Thyroid gland (tissue), 4 donors: ENCODE measurements at regions of chr19 and their contacts with region 1.

Region 1: DNA sequence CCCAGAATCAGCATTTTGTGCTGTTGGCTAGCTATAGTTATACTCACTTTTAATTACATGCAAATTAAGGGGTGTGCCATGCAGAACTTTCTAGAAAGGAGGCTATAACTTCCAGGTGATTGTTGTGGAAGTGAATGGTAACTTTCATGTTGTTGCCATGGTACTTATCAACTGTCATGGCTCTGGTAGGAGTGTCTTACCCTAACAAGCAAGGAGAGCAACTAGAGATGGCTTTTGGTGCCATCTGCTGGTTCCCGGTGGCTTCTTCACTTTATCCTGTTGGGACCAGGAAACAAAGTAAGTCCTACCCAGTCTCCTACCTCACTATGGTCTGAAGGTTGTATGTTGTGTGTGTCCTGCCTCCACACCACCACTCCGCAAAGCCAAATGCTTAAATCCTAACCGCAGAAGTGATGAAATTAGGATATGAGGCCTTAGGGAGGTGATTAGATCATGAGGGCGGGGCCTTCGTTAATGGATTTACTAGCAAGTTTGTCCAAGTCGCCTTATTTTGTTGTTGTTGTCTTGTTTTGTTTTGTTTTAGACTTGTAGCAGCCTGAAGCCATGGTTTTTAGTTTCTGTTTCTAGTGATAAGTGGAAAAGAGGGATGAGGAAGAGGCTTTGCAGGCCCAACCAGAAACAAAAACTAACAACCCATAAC is 22.6 kb downstream of the FBXL12 start:
- DNase-seq: peak; percentile 86 to 88
- H3K4me3 ChIP-seq: no peak overlapping the region
- H3K27ac ChIP-seq: no peak overlapping the region
- H3K4me1 ChIP-seq: peaks cover 3 to 5% of the 10 kb centered on the region in 2 donors
- H3K27me3 ChIP-seq: no peaks in the 10 kb centered on the region
- CTCF ChIP-seq: peak; percentile 43 to 92 (median 87)
- POLR2A ChIP-seq: no peak

Region 2: GRCh38 chr19:9323919-9324583 is 472.2 kb before region 1 on chr19 and contains the start of gene ZNF559:
- intact Hi-C with region 1: loop called (anchors 10 kb)
- DNase-seq: peak; percentile 93 to 94
- H3K4me3 ChIP-seq: peak within 1 kb of the TSS; percentile 57 to 68 (median 58)
- H3K27ac ChIP-seq: peak within 1 kb of the TSS; percentile 76 to 85 (median 84)
- H3K4me1 ChIP-seq: peaks cover 0 to 12% of the 10 kb centered on the region in 2 donors
- H3K27me3 ChIP-seq: no peaks in the 10 kb centered on the region
- CTCF ChIP-seq: peak in 3 of 6 experiments; percentile 26 to 45 (median 37)
- POLR2A ChIP-seq: peak in 1 of 2 donors; percentile 54
- total RNA-seq, gene ZNF559: 20.6 to 55.8 (median 29.1) TPM

Region 3: DNA sequence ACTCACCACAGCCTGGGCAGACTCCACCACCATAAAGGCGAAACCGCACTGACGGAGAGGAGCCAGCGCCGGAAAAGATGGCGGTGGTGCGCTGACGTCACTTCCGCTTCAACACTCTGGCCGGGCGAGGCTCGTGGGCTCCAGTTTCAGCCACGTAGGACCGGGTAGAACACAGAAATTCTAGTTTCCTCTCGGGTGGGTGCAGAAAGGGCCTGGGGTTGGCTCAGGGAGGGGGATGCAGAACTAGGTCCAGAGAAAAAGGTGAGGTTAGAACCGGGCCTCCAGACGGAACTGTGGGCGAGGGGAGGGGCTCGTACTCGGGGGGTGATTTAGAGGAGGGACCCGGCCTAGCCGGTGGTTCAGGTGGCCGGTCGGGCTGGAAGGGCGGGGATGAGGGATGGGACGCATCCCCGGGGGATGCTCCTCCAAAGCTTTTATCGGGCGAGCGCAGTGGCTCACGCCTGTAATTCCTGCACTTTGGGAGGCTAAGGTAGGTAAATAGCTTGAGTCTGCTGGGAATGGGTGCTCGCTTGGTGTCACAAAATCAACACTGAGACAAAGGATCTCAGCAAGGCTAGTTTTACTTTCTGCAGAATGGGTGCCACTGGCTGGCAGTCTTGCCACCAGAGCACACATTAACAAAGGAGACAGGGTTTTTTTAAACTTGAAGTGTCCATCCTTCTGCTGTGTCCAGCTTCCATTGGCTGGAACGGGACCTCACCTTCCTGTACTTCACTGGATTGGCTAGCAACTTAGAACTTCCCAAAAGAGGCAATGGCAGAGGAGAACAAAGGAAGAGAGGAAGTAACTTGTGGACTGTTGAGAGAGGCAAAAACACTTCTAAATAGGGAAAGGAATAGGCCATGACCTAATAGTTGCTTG is 174.8 kb before region 1 on chr19 and contains the start of gene ZNF561:
- intact Hi-C with region 1: loop called (anchors 2 kb)
- DNase-seq: peak; percentile 81 to 87
- H3K4me3 ChIP-seq: peak within 1 kb of the TSS; percentile 68 to 87 (median 68)
- H3K27ac ChIP-seq: peak within 1 kb of the TSS; percentile 86 to 95 (median 91)
- H3K4me1 ChIP-seq: peaks cover 8 to 14% of the 10 kb centered on the region in 2 donors
- H3K27me3 ChIP-seq: no peaks in the 10 kb centered on the region
- CTCF ChIP-seq: no peak
- POLR2A ChIP-seq: peak in 1 of 2 donors; percentile 31
- total RNA-seq, gene ZNF561: 35.3 to 40.7 (median 39.3) TPM

Region 4: GRCh38 chr19:9818734-9819589 is 22.7 kb after region 1 on chr19 and contains the start of gene FBXL12:
- intact Hi-C with region 1: loop called (anchors 1 kb)
- DNase-seq: peak; percentile 100
- H3K4me3 ChIP-seq: peak within 1 kb of the TSS; percentile 43 to 92 (median 56)
- H3K27ac ChIP-seq: peak within 1 kb of the TSS; percentile 75 to 94 (median 84)
- H3K4me1 ChIP-seq: peaks cover 9 to 12% of the 10 kb centered on the region in 2 donors
- H3K27me3 ChIP-seq: no peaks in the 10 kb centered on the region
- CTCF ChIP-seq: no peak
- POLR2A ChIP-seq: peak in 1 of 2 donors; percentile 83
- total RNA-seq, gene FBXL12: 16.7 to 37.1 (median 20.7) TPM